Naive thymus-derived CD4-positive, alpha-beta T cell (primary cell): ENCODE measurements at regions of chr21 and their contacts with region 1.

Region 1: GRCh38 chr21:41283211-41283818 is 33.3 kb upstream of the FAM3B start:
- DNase-seq: peak in 7 of 9 donors; percentile 38 to 77 (median 67)
- ATAC-seq: peak; percentile 97
- H3K4me3 ChIP-seq: no peak overlapping the region
- H3K4me3 Mint-ChIP-seq: no peak overlapping the region
- H3K27ac ChIP-seq: no peak overlapping the region
- H3K27ac Mint-ChIP-seq: no peak overlapping the region
- H3K4me1 ChIP-seq: no peaks in the 10 kb centered on the region
- H3K4me1 Mint-ChIP-seq: peaks cover 0 to 4% (median 0%) of the 10 kb centered on the region in 7 donors
- H3K27me3 ChIP-seq: no peaks in the 10 kb centered on the region
- H3K27me3 Mint-ChIP-seq: peaks cover 8 to 28% (median 20%) of the 10 kb centered on the region in 5 donors

Region 2: DNA sequence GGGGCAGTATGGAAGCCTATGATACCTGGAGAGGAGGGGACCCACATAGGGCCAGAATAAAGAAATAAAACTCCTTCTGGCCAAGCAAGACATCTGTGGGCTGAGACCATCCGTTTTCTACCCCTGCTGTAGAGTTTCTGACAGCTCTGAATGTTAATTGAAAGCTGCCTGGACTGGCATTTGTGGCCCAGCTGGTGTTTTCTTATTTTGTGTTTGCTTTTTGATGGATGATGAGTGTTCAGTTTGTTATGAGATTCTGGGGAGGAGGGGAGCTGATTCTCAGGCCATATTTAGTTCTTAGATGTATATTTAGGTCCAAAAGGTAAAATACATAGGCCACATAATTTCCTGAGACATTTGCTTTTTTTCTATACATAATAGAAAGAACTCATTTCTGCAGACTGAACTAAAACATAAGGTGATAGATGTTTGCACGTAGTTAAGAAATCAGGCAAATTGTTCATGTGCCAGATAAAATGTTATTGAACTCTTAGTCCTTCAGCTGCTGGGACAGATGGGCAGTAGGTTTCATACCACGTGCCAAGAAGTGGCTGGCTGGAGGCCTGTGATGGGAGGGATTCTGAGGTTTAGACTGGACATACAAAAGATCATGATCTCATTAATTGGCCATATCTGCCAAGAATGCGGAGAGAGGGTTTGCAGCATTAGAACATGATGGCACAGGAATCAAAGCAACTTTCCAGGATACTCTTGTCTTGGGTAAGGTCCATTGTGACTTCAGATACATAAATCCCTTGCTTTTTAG is 490.4 kb before region 1 on chr21:
- CTCF ChIA-PET with region 1: no interaction called
- POLR2A ChIA-PET with region 1: no interaction called
- intact Hi-C with region 1: no loop called
- DNase-seq: no peak
- ATAC-seq: no peak
- H3K4me3 ChIP-seq: no peak overlapping the region
- H3K4me3 Mint-ChIP-seq: no peak overlapping the region
- H3K27ac ChIP-seq: no peak overlapping the region
- H3K27ac Mint-ChIP-seq: no peak overlapping the region
- H3K4me1 ChIP-seq: no peaks in the 10 kb centered on the region
- H3K4me1 Mint-ChIP-seq: no peaks in the 10 kb centered on the region
- H3K27me3 ChIP-seq: no peaks in the 10 kb centered on the region
- H3K27me3 Mint-ChIP-seq: no peaks in the 10 kb centered on the region

Region 3: DNA sequence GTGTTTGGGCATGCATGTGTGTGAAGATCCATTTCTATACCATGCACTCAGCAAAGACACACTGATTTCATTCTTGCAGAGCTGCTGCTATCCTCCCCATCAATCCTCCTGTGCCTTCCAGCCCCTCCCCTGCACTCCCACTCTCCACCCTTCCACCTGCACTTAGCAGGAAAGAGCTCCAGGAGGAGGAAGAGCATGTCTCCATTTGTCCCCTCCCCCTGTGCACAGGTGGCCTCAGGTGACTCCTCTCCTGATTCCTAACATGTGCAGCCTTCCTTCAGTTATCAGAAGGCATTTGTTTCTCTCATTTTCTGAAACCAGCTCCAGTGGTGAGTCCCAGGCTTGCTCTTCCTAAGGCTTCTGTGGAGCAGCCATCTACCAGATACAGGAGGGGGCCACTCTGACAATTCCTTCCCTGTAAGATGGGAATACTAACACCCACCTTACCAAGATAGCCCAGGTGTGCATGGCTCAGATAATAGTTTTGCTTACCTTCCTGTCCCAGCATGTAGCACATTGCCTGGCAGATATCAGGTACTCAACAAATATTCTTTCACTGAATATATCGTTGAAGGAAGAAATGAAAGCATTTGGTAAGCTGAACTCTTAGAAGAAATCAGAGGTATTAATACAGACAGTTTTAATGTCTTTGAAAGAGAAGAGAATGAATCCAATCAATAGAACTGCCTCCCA is 11.4 kb after region 1 on chr21:
- CTCF ChIA-PET with region 1: interaction called, 14 read pairs
- POLR2A ChIA-PET with region 1: no interaction called
- intact Hi-C with region 1: no loop called
- DNase-seq: no peak
- ATAC-seq: no peak
- H3K4me3 ChIP-seq: no peak overlapping the region
- H3K4me3 Mint-ChIP-seq: no peak overlapping the region
- H3K27ac ChIP-seq: no peak overlapping the region
- H3K27ac Mint-ChIP-seq: peak overlapping the region in 1 of 9 donors; percentile 16
- H3K4me1 ChIP-seq: peaks cover 3 to 4% of the 10 kb centered on the region in 2 donors
- H3K4me1 Mint-ChIP-seq: peaks cover 4 to 15% (median 7%) of the 10 kb centered on the region in 7 donors
- H3K27me3 ChIP-seq: no peaks in the 10 kb centered on the region
- H3K27me3 Mint-ChIP-seq: peaks cover 18 to 52% (median 36%) of the 10 kb centered on the region in 5 donors

Region 4: DNA sequence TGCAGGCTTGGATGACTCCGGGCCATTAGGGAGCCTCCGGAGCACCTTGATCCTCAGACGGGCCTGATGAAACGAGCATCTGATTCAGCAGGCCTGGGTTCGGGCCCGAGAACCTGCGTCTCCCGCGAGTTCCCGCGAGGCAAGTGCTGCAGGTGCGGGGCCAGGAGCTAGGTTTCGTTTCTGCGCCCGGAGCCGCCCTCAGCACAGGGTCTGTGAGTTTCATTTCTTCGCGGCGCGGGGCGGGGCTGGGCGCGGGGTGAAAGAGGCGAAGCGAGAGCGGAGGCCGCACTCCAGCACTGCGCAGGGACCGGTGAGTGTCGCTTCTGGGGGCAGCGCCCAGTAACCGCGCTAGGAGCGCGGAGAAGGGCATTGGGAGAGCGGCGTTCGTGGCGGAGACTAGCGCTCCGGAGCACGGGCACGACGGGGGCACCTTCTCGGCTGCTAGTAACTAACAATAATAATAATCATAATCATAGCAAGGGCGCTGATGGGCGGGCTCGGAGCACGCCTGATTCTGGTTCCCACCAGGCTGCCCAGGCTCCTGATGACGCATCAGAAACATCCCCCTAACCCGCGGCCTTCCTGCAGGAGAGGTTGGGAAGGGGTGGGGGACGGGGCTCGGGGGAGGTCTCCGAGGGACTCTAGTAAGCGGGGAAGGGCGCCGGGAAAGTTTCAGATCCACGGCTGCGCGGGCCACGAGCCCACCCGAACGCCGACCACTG is 142.8 kb after region 1 on chr21 and contains the start of gene MX1:
- CTCF ChIA-PET with region 1: interaction called, 4 read pairs
- POLR2A ChIA-PET with region 1: no interaction called
- intact Hi-C with region 1: loop called (anchors 1 kb)
- DNase-seq: peak; percentile 76 to 90 (median 87)
- ATAC-seq: peak; percentile 100
- H3K4me3 ChIP-seq: peak within 1 kb of the TSS; percentile 99
- H3K4me3 Mint-ChIP-seq: peak within 1 kb of the TSS; percentile 94 to 98 (median 97)
- H3K27ac ChIP-seq: peak within 1 kb of the TSS; percentile 92
- H3K27ac Mint-ChIP-seq: peak within 1 kb of the TSS; percentile 95 to 100 (median 98)
- H3K4me1 ChIP-seq: peaks cover 10 to 12% of the 10 kb centered on the region in 2 donors
- H3K4me1 Mint-ChIP-seq: peaks cover 16 to 83% (median 62%) of the 10 kb centered on the region in 7 donors
- H3K27me3 ChIP-seq: no peaks in the 10 kb centered on the region
- H3K27me3 Mint-ChIP-seq: no peaks in the 10 kb centered on the region
- total RNA-seq, gene MX1: 67.6 to 384 (median 74.5) TPM

Region 5: DNA sequence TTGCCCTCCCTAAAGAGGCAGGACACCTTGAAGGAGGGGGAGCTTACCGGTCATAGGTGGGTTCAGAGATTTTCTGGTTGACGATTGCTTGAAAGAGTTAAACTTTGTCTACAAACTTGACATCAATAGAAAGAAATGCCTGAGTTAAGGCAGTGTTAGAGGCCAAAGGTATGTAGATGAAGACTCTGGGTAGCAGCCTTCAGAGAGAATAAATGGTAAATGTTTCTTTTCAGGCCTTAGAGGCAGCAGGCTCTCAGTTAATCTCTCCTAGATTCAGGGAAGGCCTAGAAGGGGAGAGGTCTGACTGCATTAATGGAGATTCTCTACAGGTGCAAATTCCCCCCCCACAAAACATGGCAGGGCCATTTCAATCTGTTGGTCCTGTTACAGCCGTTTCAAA is 170.4 kb after region 1 on chr21:
- CTCF ChIA-PET with region 1: interaction called, 65 read pairs
- POLR2A ChIA-PET with region 1: interaction called, 3 read pairs
- intact Hi-C with region 1: loop called in 1 of 2 experiments (anchors 5 kb)
- DNase-seq: no peak
- ATAC-seq: no peak
- H3K4me3 ChIP-seq: no peak overlapping the region
- H3K4me3 Mint-ChIP-seq: no peak overlapping the region
- H3K27ac ChIP-seq: no peak overlapping the region
- H3K27ac Mint-ChIP-seq: peak overlapping the region in 5 of 9 donors; percentile 30 to 87 (median 68)
- H3K4me1 ChIP-seq: no peaks in the 10 kb centered on the region
- H3K4me1 Mint-ChIP-seq: peaks cover 0 to 25% (median 0%) of the 10 kb centered on the region in 7 donors
- H3K27me3 ChIP-seq: no peaks in the 10 kb centered on the region
- H3K27me3 Mint-ChIP-seq: no peaks in the 10 kb centered on the region

Region 6: DNA sequence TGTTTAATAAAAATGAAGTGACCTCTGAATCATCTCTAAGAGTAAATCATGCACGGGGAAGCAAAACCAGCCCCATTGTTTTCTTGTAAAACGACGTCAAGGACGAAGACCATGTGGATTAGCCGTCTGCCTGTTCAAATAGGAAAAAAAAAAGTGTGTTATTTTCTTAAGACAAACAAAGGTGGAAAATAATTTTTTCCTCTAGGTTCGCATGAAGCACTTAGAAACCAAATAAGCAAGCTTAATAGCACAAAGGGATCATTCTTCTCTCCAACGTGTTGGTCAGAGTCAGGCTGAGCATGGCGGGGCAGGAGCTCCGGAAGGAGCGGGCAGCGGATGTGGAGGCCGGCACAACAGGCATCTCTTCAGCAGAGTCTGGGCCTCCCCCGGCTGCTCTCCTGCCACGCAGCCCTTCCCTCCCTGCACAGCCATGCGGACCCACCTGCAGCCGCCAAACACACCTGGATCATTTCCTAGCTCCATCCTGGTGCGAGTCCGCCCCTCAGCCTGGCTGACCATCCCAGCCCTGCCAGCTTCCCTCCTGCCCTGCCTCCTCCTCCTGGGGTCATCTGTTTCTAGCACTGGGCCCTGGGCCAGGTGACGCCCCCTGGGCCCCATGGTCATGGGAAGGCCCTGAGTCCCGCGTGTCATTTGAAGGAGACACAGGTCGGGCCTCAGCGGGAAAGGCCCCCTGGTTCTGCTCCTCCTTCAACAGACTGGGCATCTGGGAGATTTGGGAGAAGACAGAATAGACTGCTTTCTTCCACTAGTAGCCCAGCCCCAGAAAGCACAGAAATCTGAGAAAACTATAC is 182.9 kb after region 1 on chr21:
- CTCF ChIA-PET with region 1: interaction called, 19 read pairs
- POLR2A ChIA-PET with region 1: no interaction called
- intact Hi-C with region 1: no loop called
- DNase-seq: no peak
- ATAC-seq: no peak
- H3K4me3 ChIP-seq: no peak overlapping the region
- H3K4me3 Mint-ChIP-seq: no peak overlapping the region
- H3K27ac ChIP-seq: no peak overlapping the region
- H3K27ac Mint-ChIP-seq: no peak overlapping the region
- H3K4me1 ChIP-seq: no peaks in the 10 kb centered on the region
- H3K4me1 Mint-ChIP-seq: peaks cover 0 to 16% (median 0%) of the 10 kb centered on the region in 7 donors
- H3K27me3 ChIP-seq: no peaks in the 10 kb centered on the region
- H3K27me3 Mint-ChIP-seq: peaks cover 6 to 32% (median 22%) of the 10 kb centered on the region in 5 donors

Region 7: GRCh38 chr21:41777951-41778874 is 494.9 kb after region 1 on chr21:
- CTCF ChIA-PET with region 1: interaction called, 3 read pairs
- POLR2A ChIA-PET with region 1: no interaction called
- intact Hi-C with region 1: loop called in 1 of 2 experiments (anchors 2 kb)
- DNase-seq: no peak
- ATAC-seq: peak; percentile 46
- H3K4me3 ChIP-seq: no peak overlapping the region
- H3K4me3 Mint-ChIP-seq: peak overlapping the region in 1 of 10 donors; percentile 66
- H3K27ac ChIP-seq: no peak overlapping the region
- H3K27ac Mint-ChIP-seq: no peak overlapping the region
- H3K4me1 ChIP-seq: no peaks in the 10 kb centered on the region
- H3K4me1 Mint-ChIP-seq: peaks cover 0 to 15% (median 7%) of the 10 kb centered on the region in 7 donors
- H3K27me3 ChIP-seq: peaks cover 9 to 20% of the 10 kb centered on the region in 2 donors
- H3K27me3 Mint-ChIP-seq: peaks cover 61 to 67% (median 66%) of the 10 kb centered on the region in 5 donors

Region 8: DNA sequence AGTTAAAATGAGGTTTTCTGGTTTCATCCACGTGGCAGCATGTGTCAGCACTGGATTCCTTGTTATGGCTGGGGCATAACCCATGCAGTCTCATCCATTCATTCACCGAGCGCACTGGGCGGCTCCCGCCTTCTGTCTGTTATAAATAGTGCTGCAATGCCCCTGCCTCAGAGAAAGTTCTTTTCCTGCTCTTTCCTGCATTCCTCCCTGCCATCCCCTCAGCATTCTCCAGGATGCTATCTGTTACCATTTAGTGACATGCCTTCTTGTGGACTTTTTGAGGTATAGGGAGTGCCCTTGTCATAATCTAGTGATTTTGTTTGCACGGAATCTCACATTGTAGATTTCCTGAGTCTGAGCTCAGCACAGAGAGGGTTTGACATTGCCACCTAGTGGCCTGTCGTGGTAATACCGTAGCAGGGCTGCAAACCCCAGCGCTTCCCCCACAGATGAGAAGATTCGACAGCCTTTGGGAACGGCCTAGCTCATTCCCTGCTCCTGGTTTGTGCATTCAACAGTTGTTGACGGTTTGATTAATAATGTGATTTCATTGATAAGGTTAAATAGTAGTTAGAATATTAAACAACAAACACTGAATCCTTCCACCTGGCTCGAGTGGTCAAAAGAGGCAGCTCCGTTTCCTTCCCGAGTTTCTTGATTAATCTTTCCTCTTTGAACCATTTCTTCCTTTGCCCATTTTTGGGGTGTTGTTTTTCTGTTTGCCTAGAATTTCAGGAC is 834.1 kb after region 1 on chr21:
- CTCF ChIA-PET with region 1: interaction called, 5 read pairs
- POLR2A ChIA-PET with region 1: no interaction called
- intact Hi-C with region 1: loop called in 1 of 2 experiments (anchors 5 kb)
- DNase-seq: peak; percentile 48 to 82 (median 70)
- ATAC-seq: peak; percentile 91
- H3K4me3 ChIP-seq: no peak overlapping the region
- H3K4me3 Mint-ChIP-seq: peak overlapping the region in 7 of 10 donors; percentile 31 to 82 (median 57)
- H3K27ac ChIP-seq: no peak overlapping the region
- H3K27ac Mint-ChIP-seq: peak overlapping the region in 3 of 9 donors; percentile 6 to 65 (median 52)
- H3K4me1 ChIP-seq: peaks cover 0 to 5% of the 10 kb centered on the region in 2 donors
- H3K4me1 Mint-ChIP-seq: peaks cover 18 to 33% (median 25%) of the 10 kb centered on the region in 7 donors
- H3K27me3 ChIP-seq: peaks cover 0 to 5% of the 10 kb centered on the region in 2 donors
- H3K27me3 Mint-ChIP-seq: peaks cover 44 to 68% (median 53%) of the 10 kb centered on the region in 5 donors